ENCODE measurements at regions of chr12 and their contacts with region 1.

Region 1: GRCh38 chr12:57280211-57281062 is 29.4 kb upstream of the STAC3 start:
- DNase-seq: peak; percentile 76
- H3K4me3 Mint-ChIP-seq: peak overlapping the region; percentile 24
- H3K27ac Mint-ChIP-seq: peak overlapping the region; percentile 86
- H3K4me1 Mint-ChIP-seq: peaks cover 21% of the 10 kb centered on the region
- H3K27me3 Mint-ChIP-seq: no peaks in the 10 kb centered on the region

Region 2: DNA sequence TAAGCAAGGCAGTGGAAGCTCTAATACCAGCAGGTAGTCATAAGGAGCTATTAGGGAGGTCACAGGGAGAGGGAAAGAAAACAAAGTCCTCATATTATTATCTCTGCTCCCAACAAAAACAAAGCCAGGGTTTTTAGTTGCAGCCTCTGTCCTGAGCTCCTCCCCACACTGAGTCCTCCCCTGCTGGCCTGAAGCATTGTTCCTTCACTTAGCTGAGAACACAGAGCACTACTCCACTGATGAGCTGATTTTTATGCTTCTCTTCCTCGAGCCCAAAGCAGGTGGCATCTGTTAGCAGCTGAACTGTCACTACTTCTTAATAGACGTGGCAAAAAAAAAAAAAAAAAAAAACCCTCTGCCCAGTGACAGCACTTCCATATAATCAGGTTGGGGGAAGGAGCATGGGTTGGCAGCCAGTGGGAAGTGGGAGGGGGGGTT is 19.0 kb before region 1 on chr12:
- CTCF ChIA-PET with region 1: interaction called, 29 read pairs
- POLR2A ChIA-PET with region 1: interaction called, 3 read pairs
- DNase-seq: no peak
- H3K4me3 Mint-ChIP-seq: no peak overlapping the region
- H3K27ac Mint-ChIP-seq: no peak overlapping the region
- H3K4me1 Mint-ChIP-seq: peaks cover 4% of the 10 kb centered on the region
- H3K27me3 Mint-ChIP-seq: no peaks in the 10 kb centered on the region

Region 3: GRCh38 chr12:57299514-57300016 is 19.1 kb after region 1 on chr12:
- CTCF ChIA-PET with region 1: no interaction called
- POLR2A ChIA-PET with region 1: no interaction called
- DNase-seq: no peak
- H3K4me3 Mint-ChIP-seq: no peak overlapping the region
- H3K27ac Mint-ChIP-seq: no peak overlapping the region
- H3K4me1 Mint-ChIP-seq: no peaks in the 10 kb centered on the region
- H3K27me3 Mint-ChIP-seq: no peaks in the 10 kb centered on the region

Region 4: DNA sequence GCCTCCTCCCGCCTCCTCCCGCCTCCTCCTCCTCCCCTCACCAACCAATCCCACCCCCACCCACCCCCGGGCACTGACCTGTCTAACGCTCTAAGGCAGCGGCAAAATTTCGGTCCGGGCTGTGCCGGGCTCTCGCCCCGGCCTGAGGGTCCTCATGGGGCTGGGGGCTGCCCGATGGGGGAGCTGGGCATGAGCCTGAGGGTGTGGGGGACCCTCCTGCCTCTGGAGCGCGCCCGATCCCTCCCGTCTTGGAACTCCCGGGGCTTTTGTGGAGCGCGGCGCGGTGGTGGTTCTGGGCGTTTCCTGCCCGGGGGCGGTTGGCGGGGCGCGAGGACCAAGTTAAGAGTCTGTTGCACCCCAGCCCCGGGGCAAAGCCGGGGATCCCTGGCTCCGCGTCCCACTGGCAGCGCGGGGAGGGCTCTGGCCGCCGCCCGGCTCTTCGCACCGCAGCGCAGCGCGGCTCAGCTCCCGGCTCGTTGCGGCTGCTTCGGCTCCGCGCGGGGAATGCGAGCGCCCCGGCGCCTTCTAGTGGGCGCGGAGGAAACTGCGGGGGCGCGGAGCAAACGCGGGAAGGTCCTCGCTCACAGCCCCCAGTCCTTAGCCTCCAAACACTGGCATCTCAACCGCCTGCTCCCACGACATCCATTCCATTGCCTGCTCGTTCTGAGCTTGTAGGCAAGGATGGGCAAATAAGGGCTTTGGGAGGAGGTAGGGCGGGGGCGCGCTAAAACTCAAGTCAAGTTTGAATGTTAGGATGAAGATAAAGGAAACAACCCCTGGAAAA is 352.4 kb after region 1 on chr12 and contains the start of gene B4GALNT1:
- CTCF ChIA-PET with region 1: no interaction called
- POLR2A ChIA-PET with region 1: no interaction called
- DNase-seq: peak; percentile 71
- H3K4me3 Mint-ChIP-seq: peak within 1 kb of the TSS; percentile 63
- H3K27ac Mint-ChIP-seq: no peak within 1 kb of the TSS
- H3K4me1 Mint-ChIP-seq: peaks cover 14% of the 10 kb centered on the region
- H3K27me3 Mint-ChIP-seq: peaks cover 57% of the 10 kb centered on the region
- total RNA-seq, gene B4GALNT1: 1.4 to 1.8 TPM